Activated CD4-positive, alpha-beta T cell treated with anti-CD3 and anti-CD28 coated beads, Interleukin-2, amount 10 ng/mL, durations not matched to agents 7 days and 5 days (primary cell): ENCODE measurements at regions of chr5 and their contacts with region 1.

Region 1: DNA sequence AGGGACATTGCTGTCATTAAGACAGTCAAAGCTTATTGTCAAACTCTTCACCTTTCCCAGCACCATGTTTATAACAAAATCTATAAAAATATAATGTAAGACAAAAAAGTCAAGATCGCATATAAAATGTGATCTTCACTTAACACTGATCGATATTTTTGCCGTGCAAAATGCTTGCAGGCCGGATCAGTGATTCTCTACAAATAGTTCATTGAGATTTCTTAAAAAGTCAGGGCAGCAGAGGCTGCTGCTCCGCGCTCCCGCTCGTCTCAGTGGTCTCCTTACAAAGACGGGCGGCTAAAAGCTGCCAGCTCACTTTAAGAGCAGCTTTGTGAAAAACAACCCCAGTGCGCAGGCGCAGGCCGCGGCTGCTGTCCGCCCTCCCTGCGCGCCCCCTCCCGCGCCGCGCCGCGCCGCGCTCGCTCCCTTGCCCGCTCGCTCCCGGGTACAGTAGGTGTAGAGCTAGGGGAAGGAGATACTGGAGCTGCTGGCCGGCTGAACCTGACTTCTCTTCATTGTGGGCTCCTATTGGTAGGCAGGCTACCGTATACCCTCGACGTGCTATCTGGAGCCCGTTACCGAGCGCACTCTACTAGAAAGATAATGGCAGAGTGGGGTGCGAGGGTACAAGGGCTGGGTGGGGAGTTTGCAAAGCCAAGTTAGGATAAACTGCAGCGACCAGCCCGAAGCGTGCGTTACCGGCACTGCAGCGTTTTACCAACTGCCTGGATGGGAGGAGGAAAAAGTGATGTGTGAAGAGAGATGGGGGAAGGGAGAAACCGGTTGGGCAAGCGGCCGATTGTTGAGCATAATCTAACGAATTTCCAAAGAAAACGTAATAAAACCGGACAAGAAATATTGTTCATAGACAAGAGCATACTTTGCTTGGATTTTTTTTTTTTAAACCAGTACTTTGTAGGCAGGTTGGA is at the start of gene ARRDC3:
- DNase-seq: peak; percentile 96
- H3K4me3 Mint-ChIP-seq: peak within 1 kb of the TSS; percentile 96
- H3K27ac Mint-ChIP-seq: peak within 1 kb of the TSS; percentile 100
- H3K4me1 Mint-ChIP-seq: peaks cover 23% of the 10 kb centered on the region
- H3K27me3 Mint-ChIP-seq: no peaks in the 10 kb centered on the region
- total RNA-seq, gene ARRDC3: 34.1 to 35.0 TPM

Region 2: GRCh38 chr5:91219803-91220371 is 163.4 kb before region 1 on chr5:
- CTCF ChIA-PET with region 1: interaction called, 67 read pairs
- POLR2A ChIA-PET with region 1: interaction called, 5 read pairs
- DNase-seq: peak; percentile 44
- H3K4me3 Mint-ChIP-seq: no peak overlapping the region
- H3K27ac Mint-ChIP-seq: no peak overlapping the region
- H3K4me1 Mint-ChIP-seq: no peaks in the 10 kb centered on the region
- H3K27me3 Mint-ChIP-seq: peaks cover 2% of the 10 kb centered on the region

Region 3: GRCh38 chr5:91225848-91226686 is 157.2 kb before region 1 on chr5:
- CTCF ChIA-PET with region 1: interaction called, 67 read pairs
- POLR2A ChIA-PET with region 1: interaction called, 5 read pairs
- DNase-seq: peak; percentile 66
- H3K4me3 Mint-ChIP-seq: no peak overlapping the region
- H3K27ac Mint-ChIP-seq: peak overlapping the region; percentile 7
- H3K4me1 Mint-ChIP-seq: no peaks in the 10 kb centered on the region
- H3K27me3 Mint-ChIP-seq: no peaks in the 10 kb centered on the region

Region 4: GRCh38 chr5:91272858-91273257 is 110.4 kb before region 1 on chr5:
- CTCF ChIA-PET with region 1: interaction called, 10 read pairs
- POLR2A ChIA-PET with region 1: interaction called, 11 read pairs
- DNase-seq: no peak
- H3K4me3 Mint-ChIP-seq: no peak overlapping the region
- H3K27ac Mint-ChIP-seq: no peak overlapping the region
- H3K4me1 Mint-ChIP-seq: peaks cover 26% of the 10 kb centered on the region
- H3K27me3 Mint-ChIP-seq: peaks cover 9% of the 10 kb centered on the region

Region 5: GRCh38 chr5:91280362-91281269 is 102.7 kb before region 1 on chr5:
- CTCF ChIA-PET with region 1: interaction called, 11 read pairs
- POLR2A ChIA-PET with region 1: interaction called, 13 read pairs
- DNase-seq: peak; percentile 75
- H3K4me3 Mint-ChIP-seq: peak overlapping the region; percentile 74
- H3K27ac Mint-ChIP-seq: peak overlapping the region; percentile 85
- H3K4me1 Mint-ChIP-seq: peaks cover 26% of the 10 kb centered on the region
- H3K27me3 Mint-ChIP-seq: peaks cover 21% of the 10 kb centered on the region

Region 6: DNA sequence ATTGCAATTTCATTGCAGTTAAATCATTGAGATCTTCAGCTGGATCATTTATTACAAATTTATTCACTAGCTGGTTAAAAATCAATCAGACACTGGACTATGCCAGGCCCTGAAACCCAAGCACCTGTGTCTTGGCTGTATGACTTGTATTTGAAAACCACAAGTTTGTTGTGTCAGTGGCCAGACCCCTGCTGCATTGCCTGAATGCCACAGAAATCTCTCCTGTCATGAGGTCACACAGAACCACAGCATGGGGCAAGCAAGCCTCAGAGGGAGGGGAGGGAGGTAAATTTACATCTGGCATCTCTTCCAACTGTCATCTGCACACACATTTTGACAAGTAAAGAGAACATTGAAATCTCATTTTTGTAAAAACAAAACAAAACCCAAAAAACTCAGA is 90.2 kb before region 1 on chr5:
- CTCF ChIA-PET with region 1: interaction called, 13 read pairs
- POLR2A ChIA-PET with region 1: no interaction called
- DNase-seq: peak; percentile 15
- H3K4me3 Mint-ChIP-seq: no peak overlapping the region
- H3K27ac Mint-ChIP-seq: no peak overlapping the region
- H3K4me1 Mint-ChIP-seq: peaks cover 16% of the 10 kb centered on the region
- H3K27me3 Mint-ChIP-seq: no peaks in the 10 kb centered on the region

Region 7: GRCh38 chr5:91419571-91420537 is 36.6 kb after region 1 on chr5:
- CTCF ChIA-PET with region 1: interaction called, 23 read pairs
- POLR2A ChIA-PET with region 1: no interaction called
- DNase-seq: peak; percentile 76
- H3K4me3 Mint-ChIP-seq: no peak overlapping the region
- H3K27ac Mint-ChIP-seq: no peak overlapping the region
- H3K4me1 Mint-ChIP-seq: peaks cover 3% of the 10 kb centered on the region
- H3K27me3 Mint-ChIP-seq: peaks cover 2% of the 10 kb centered on the region